ENCODE measurements at regions of chr12 and their contacts with region 1.

Region 1: GRCh38 chr12:116620492-116621191 is 61.5 kb downstream of the MAP1LC3B2 start:
- DNase-seq: no peak
- ATAC-seq: no peak
- H3K4me3 ChIP-seq: no peak overlapping the region
- H3K27ac ChIP-seq: no peak overlapping the region
- H3K4me1 ChIP-seq: peaks cover 8% of the 10 kb centered on the region; the same call in 1 of the 2 replicates
- H3K27me3 ChIP-seq: no peaks in the 10 kb centered on the region
- CTCF ChIP-seq: no peak

Region 2: GRCh38 chr12:116515684-116516083 is 105.0 kb before region 1 on chr12:
- CTCF ChIA-PET with region 1: no interaction called
- POLR2A ChIA-PET with region 1: interaction called, 13 read pairs
- in situ Hi-C with region 1: no loop called
- intact Hi-C with region 1: no loop called
- DNase-seq: no peak
- ATAC-seq: no peak
- H3K4me3 ChIP-seq: no peak overlapping the region
- H3K27ac ChIP-seq: no peak overlapping the region; the same call in 1 of the 2 replicates
- H3K4me1 ChIP-seq: peaks cover 18% of the 10 kb centered on the region
- H3K27me3 ChIP-seq: no peaks in the 10 kb centered on the region
- CTCF ChIP-seq: no peak

Region 3: GRCh38 chr12:116697305-116697704 is 76.7 kb after region 1 on chr12:
- CTCF ChIA-PET with region 1: interaction called, 3 read pairs
- POLR2A ChIA-PET with region 1: no interaction called
- in situ Hi-C with region 1: no loop called
- intact Hi-C with region 1: loop called (anchors 5 kb)
- DNase-seq: no peak
- ATAC-seq: peak; percentile 91
- H3K4me3 ChIP-seq: no peak overlapping the region
- H3K27ac ChIP-seq: no peak overlapping the region
- H3K4me1 ChIP-seq: peaks cover 4% of the 10 kb centered on the region
- H3K27me3 ChIP-seq: no peaks in the 10 kb centered on the region
- CTCF ChIP-seq: peak; percentile 76